ENCODE measurements at regions of chr20 and their contacts with region 1.

Region 1: GRCh38 chr20:25525295-25526266 is 59.8 kb downstream of the NINL start:
- DNase-seq: peak in 1 of 2 donors; percentile 68
- ATAC-seq: peak; percentile 83
- H3K4me3 ChIP-seq: no peak overlapping the region
- H3K27ac ChIP-seq: peak overlapping the region; percentile 37 to 57
- H3K4me1 ChIP-seq: peaks cover 0 to 2% of the 10 kb centered on the region in 2 donors
- H3K27me3 ChIP-seq: no peaks in the 10 kb centered on the region

Region 2: GRCh38 chr20:25360635-25361286 is 164.8 kb before region 1 on chr20:
- intact Hi-C with region 1: no loop called
- DNase-seq: peak in 1 of 2 donors; percentile 49
- ATAC-seq: no peak
- H3K4me3 ChIP-seq: no peak overlapping the region
- H3K27ac ChIP-seq: no peak overlapping the region
- H3K4me1 ChIP-seq: no peaks in the 10 kb centered on the region
- H3K27me3 ChIP-seq: no peaks in the 10 kb centered on the region

Region 3: GRCh38 chr20:25584905-25585704 is 59.5 kb after region 1 on chr20 and contains the start of gene NINL:
- intact Hi-C with region 1: loop called in 1 of 2 experiments (anchors 5 kb)
- DNase-seq: peak; percentile 74 to 90
- ATAC-seq: peak; percentile 88
- H3K4me3 ChIP-seq: peak within 1 kb of the TSS; percentile 62 to 71
- H3K27ac ChIP-seq: no peak within 1 kb of the TSS
- H3K4me1 ChIP-seq: no peaks in the 10 kb centered on the region
- H3K27me3 ChIP-seq: no peaks in the 10 kb centered on the region
- total RNA-seq, gene NINL: 9.1 to 16.7 TPM